CD4-positive, alpha-beta T cell (primary cell): ENCODE measurements at regions of chr7 and their contacts with region 1.

Region 1: DNA sequence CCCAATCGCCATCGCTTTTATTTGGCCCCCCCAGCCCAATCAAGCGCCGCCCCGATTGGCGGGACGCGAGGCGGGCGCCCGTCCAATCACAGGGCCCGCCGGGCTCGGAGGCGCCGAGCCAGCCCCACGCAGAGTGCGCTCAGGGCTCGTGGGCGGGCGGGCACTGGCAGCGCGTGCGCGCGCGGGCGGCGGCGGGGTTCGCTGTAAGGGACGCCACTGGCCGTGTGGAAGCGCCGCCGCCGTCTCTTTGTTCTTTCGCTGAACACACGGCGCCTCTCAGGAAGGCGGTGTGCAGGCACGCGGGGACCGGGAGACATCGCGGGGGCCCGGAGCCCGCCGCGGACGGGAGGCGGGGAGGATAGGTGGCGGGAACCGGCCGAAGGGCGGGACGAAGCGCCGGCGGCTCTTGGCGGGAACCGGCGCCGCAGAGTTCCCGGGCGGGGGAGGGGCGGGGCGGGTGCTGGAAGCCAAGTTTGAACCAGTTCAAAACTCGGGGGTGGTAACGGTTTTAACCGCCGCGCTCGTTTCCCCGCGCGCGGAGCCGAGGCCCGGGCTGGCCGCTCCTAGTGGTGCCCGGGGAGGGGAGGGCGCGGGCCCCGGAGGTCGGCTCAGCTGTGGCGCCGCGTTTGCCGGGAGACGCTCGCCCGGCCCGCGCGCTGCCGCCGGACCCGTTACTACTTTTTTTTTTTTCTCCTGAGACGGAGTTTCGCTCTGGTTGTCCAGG is 370 bp upstream of the EZH2 start:
- DNase-seq: peak; percentile 84 to 97 (median 90)
- ATAC-seq: peak; percentile 91
- H3K4me3 ChIP-seq: peak overlapping the region; percentile 88
- H3K4me3 Mint-ChIP-seq: peak overlapping the region; percentile 95
- H3K27ac ChIP-seq: peak overlapping the region; percentile 15 to 86
- H3K27ac Mint-ChIP-seq: peak overlapping the region; percentile 88
- H3K4me1 ChIP-seq: peaks cover 16% of the 10 kb centered on the region
- H3K4me1 Mint-ChIP-seq: peaks cover 30% of the 10 kb centered on the region
- H3K27me3 ChIP-seq: no peaks in the 10 kb centered on the region
- H3K27me3 Mint-ChIP-seq: no peaks in the 10 kb centered on the region
- CTCF ChIP-seq: no peak

Region 2: GRCh38 chr7:148867596-148868377 is 16.7 kb before region 1 on chr7:
- CTCF ChIA-PET with region 1: no interaction called
- POLR2A ChIA-PET with region 1: interaction called, 11 read pairs
- intact Hi-C with region 1: no loop called
- DNase-seq: no peak
- ATAC-seq: no peak
- H3K4me3 ChIP-seq: no peak overlapping the region
- H3K4me3 Mint-ChIP-seq: no peak overlapping the region
- H3K27ac ChIP-seq: no peak overlapping the region
- H3K27ac Mint-ChIP-seq: no peak overlapping the region
- H3K4me1 ChIP-seq: peaks cover 4% of the 10 kb centered on the region
- H3K4me1 Mint-ChIP-seq: peaks cover 34% of the 10 kb centered on the region
- H3K27me3 ChIP-seq: no peaks in the 10 kb centered on the region
- H3K27me3 Mint-ChIP-seq: no peaks in the 10 kb centered on the region
- CTCF ChIP-seq: no peak

Region 3: GRCh38 chr7:148940702-148941597 is 56.5 kb after region 1 on chr7:
- CTCF ChIA-PET with region 1: interaction called, 12 read pairs
- POLR2A ChIA-PET with region 1: interaction called, 68 read pairs
- intact Hi-C with region 1: loop called (anchors 1 to 2 kb)
- DNase-seq: peak; percentile 37 to 87 (median 57)
- ATAC-seq: peak; percentile 69
- H3K4me3 ChIP-seq: peak overlapping the region; percentile 89
- H3K4me3 Mint-ChIP-seq: peak overlapping the region; percentile 97
- H3K27ac ChIP-seq: peak overlapping the region; percentile 87 to 88
- H3K27ac Mint-ChIP-seq: peak overlapping the region; percentile 98
- H3K4me1 ChIP-seq: peaks cover 7% of the 10 kb centered on the region
- H3K4me1 Mint-ChIP-seq: peaks cover 27% of the 10 kb centered on the region
- H3K27me3 ChIP-seq: no peaks in the 10 kb centered on the region
- H3K27me3 Mint-ChIP-seq: no peaks in the 10 kb centered on the region
- CTCF ChIP-seq: no peak

Region 4: GRCh38 chr7:148987010-148987750 is 102.7 kb after region 1 on chr7:
- CTCF ChIA-PET with region 1: no interaction called
- POLR2A ChIA-PET with region 1: interaction called, 9 read pairs
- intact Hi-C with region 1: loop called in 1 of 2 experiments (anchors 2 kb)
- DNase-seq: peak; percentile 58 to 94 (median 70)
- ATAC-seq: peak; percentile 71
- H3K4me3 ChIP-seq: peak overlapping the region; percentile 95
- H3K4me3 Mint-ChIP-seq: peak overlapping the region; percentile 96
- H3K27ac ChIP-seq: peak overlapping the region; percentile 73 to 94
- H3K27ac Mint-ChIP-seq: peak overlapping the region; percentile 95
- H3K4me1 ChIP-seq: peaks cover 41% of the 10 kb centered on the region
- H3K4me1 Mint-ChIP-seq: peaks cover 55% of the 10 kb centered on the region
- H3K27me3 ChIP-seq: no peaks in the 10 kb centered on the region
- H3K27me3 Mint-ChIP-seq: peaks cover 5% of the 10 kb centered on the region
- CTCF ChIP-seq: no peak

Region 5: DNA sequence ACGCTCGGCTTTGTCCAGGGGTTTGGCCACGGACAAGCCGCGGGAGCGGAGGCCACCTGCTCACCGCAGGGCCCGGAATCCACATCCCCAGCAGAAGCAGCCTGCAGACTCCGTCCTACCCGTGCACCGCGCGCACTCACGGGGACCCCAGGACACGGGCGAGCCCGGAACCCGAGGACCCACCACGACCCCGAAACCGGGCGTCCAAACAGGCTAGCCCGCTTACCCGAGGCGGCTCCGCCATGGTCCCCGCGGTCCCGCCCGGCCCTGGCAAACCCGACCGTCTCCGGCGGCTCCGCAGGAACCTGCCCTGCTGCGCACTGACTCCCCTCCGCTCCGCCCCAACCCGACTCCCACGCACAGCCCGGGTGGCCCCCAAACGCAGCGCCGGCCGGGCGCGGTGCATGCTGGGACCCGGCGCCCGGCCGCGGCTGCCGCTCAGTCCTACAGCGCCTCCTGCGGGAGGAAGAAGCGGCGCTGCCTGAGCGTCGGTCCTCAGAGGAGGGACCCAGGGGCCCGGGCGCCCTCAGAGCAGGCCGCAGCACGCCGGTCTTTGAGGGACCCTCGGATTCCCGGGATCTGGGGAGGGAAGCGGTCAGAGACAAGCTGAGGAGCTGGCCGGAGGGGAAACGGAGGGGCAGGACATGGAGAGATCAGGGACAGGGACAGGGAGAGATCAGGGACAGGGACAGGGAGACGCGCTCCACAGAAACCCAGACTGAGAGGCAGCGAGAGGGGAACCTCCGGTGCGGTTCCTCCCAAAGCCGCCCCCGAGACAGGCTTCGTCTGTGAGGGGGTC is 206.1 kb after region 1 on chr7 and contains the start of gene ZNF786:
- CTCF ChIA-PET with region 1: no interaction called
- POLR2A ChIA-PET with region 1: no interaction called
- intact Hi-C with region 1: loop called in 1 of 2 experiments (anchors 1 kb)
- DNase-seq: peak; percentile 81 to 97 (median 90)
- ATAC-seq: peak; percentile 82
- H3K4me3 ChIP-seq: peak within 1 kb of the TSS; percentile 72
- H3K4me3 Mint-ChIP-seq: peak within 1 kb of the TSS; percentile 100
- H3K27ac ChIP-seq: peak within 1 kb of the TSS; percentile 82 to 90
- H3K27ac Mint-ChIP-seq: peak within 1 kb of the TSS; percentile 93
- H3K4me1 ChIP-seq: peaks cover 27% of the 10 kb centered on the region
- H3K4me1 Mint-ChIP-seq: peaks cover 26% of the 10 kb centered on the region
- H3K27me3 ChIP-seq: no peaks in the 10 kb centered on the region
- H3K27me3 Mint-ChIP-seq: no peaks in the 10 kb centered on the region
- CTCF ChIP-seq: peak; percentile 87
- total RNA-seq, gene ZNF786: 2.7 to 3.5 TPM

Region 6: GRCh38 chr7:149284850-149285626 is 400.6 kb after region 1 on chr7:
- CTCF ChIA-PET with region 1: no interaction called
- POLR2A ChIA-PET with region 1: no interaction called
- intact Hi-C with region 1: loop called in 1 of 2 experiments (anchors 10 kb)
- DNase-seq: peak; percentile 96 to 99 (median 98)
- ATAC-seq: peak; percentile 93
- H3K4me3 ChIP-seq: peak overlapping the region; percentile 65
- H3K4me3 Mint-ChIP-seq: peak overlapping the region; percentile 92
- H3K27ac ChIP-seq: peak overlapping the region; percentile 21 to 63
- H3K27ac Mint-ChIP-seq: peak overlapping the region; percentile 90
- H3K4me1 ChIP-seq: peaks cover 47% of the 10 kb centered on the region
- H3K4me1 Mint-ChIP-seq: peaks cover 44% of the 10 kb centered on the region
- H3K27me3 ChIP-seq: no peaks in the 10 kb centered on the region
- H3K27me3 Mint-ChIP-seq: no peaks in the 10 kb centered on the region
- CTCF ChIP-seq: peak; percentile 13